Activated naive CD4-positive, alpha-beta T cell treated with anti-CD3 and anti-CD28 coated beads for 36 hours (primary cell): ENCODE measurements at regions of chr2 and their contacts with region 1.

Region 1: DNA sequence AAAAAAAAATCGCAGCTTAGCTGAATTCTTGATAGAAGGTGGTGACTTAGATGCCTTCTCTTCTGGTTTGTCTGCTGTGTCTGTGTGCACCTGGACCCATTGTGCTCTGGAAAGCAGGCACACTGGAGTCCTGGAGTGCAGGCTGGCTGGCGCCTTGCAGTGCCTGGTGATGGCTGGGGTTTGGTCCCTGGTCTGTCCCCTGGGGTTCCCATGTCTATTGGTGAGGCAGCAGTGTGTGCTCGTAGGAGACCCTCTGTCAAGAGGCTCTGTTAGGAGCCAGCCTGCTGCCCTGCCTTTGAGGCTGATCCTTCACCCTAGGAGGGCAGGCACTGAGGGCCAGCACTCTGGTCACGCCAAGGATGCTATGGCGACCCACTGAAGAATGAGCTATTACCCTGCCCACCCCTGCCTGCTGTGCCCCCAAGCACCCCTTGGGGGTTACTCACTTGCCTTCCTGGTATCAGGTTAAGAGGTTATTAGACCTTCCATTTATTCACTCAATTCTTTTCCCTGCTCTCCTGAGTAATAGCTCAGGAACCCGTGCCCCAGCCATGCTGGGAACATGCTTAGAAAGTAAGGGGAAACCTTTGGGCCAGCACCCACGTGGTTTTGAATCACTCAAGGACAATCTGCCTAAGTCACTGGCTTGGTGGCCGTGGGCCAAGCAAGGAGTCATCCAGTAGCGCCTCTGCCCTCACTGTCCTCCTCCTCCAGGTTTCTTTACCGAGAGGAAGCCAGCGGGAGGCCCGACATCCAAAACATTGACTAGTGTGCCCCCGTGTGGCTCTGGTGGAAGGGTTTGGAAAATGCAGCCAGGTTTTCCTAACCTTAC is 284.5 kb downstream of the PRKCE start:
- DNase-seq: peak; percentile 76
- H3K4me3 Mint-ChIP-seq: no peak overlapping the region
- H3K27ac Mint-ChIP-seq: no peak overlapping the region
- H3K4me1 Mint-ChIP-seq: peaks cover 3% of the 10 kb centered on the region
- H3K27me3 Mint-ChIP-seq: no peaks in the 10 kb centered on the region

Region 2: GRCh38 chr2:45643543-45644542 is 292.2 kb before region 1 on chr2:
- CTCF ChIA-PET with region 1: interaction called, 7 read pairs
- intact Hi-C with region 1: loop called (anchors 1 kb)
- DNase-seq: peak; percentile 66
- H3K4me3 Mint-ChIP-seq: peak overlapping the region; percentile 36
- H3K27ac Mint-ChIP-seq: no peak overlapping the region
- H3K4me1 Mint-ChIP-seq: peaks cover 4% of the 10 kb centered on the region
- H3K27me3 Mint-ChIP-seq: peaks cover 22% of the 10 kb centered on the region